ENCODE measurements at regions of chr11 and their contacts with region 1.

Region 1: DNA sequence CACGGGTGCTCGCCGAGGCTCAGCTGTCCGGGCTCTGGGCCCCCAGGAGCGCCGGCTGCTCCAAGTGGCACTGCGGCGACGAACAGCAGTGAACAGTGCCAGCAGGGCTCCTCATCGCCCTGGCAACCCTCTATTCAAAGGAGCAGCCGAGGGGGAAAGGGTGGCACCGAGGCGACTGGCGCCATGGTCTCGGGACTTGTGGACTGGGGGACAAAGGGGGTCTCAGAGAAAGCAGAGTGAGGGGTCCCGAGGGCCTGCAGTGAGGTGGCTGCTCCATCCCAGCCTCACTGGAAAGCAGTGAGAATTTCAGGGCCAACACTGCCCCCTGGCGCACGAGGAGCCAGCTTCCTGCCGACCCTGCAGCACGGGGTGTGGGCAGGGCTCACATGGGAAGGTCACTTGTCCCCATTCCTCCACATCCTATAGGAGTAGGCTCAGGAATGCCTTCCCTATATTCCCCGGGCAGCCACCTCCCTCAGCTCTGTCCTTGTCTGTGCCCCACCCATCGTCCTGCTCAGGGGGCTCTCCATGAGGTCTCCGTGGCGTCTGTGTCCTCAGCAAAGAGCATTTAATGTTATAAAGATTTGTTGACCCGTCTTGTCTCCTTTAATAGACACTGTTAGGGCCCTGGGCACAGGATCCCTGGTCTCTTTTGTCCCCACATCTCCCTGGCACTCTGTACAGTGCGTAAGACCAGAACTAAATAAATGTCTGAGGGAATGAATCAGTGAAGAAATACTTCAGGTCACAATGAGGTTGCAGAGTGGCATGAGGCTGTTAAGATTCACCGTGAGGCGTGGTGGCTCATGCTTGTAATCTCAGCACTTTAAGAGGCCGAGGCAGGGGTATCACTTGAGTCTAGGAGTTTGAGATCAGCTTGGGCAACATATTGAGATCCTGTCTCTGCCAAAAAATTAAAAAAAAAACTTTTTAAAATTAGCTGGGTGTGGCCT is 26.4 kb downstream of the LRFN4 start:
- DNase-seq: no peak
- ATAC-seq: peak; percentile 94
- H3K4me3 ChIP-seq: no peak overlapping the region
- H3K27ac ChIP-seq: no peak overlapping the region
- H3K4me1 ChIP-seq: peaks cover 3% of the 10 kb centered on the region; the same call in 1 of the 2 replicates
- H3K27me3 ChIP-seq: peaks cover 0 to 3% of the 10 kb centered on the region in 2 experiments; a peak in 2 of 4 replicates
- CTCF ChIP-seq: peak; percentile 71 to 77 (median 72)
- EP300 ChIP-seq: no peak
- POLR2A ChIP-seq: no peak
- RAD21 ChIP-seq: peak; percentile 71

Region 2: DNA sequence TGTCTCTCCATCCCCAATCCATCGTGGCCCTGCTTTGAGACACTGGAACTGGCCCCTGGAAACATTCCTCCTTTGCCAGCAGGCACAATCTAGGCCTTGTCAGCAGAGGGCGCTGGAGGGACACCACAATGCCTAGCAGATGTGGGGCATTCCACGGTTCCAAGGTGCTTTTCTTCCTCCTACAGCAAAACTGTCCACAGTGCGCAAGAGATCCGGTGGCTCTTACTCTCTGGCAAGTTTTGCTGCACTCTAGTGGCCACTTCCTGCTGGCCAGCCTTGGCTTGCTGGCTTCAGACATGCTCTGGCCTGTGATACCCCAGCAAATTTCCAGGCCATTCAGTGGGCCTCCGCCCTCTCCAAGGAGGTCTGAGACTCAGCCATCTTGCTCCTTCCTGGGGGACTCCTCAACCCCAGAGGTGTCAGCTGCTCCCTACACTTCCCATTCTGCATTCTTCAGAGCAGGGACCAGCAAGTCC is 188.5 kb before region 1 on chr11:
- CTCF ChIA-PET with region 1: interaction called, 10 read pairs
- POLR2A ChIA-PET with region 1: no interaction called
- RAD21 ChIA-PET with region 1: interaction called, 7 read pairs
- SMC1A ChIA-PET with region 1: interaction called, 7 read pairs
- in situ Hi-C with region 1: loop called (anchors 5 kb)
- intact Hi-C with region 1: loop called (anchors 1 kb)
- DNase-seq: peak; percentile 58
- ATAC-seq: peak; percentile 97
- H3K4me3 ChIP-seq: no peak overlapping the region
- H3K27ac ChIP-seq: no peak overlapping the region
- H3K4me1 ChIP-seq: no peaks in the 10 kb centered on the region
- H3K27me3 ChIP-seq: no peaks in the 10 kb centered on the region; a peak in 1 of 4 replicates
- CTCF ChIP-seq: peak; percentile 94 to 99 (median 97)
- EP300 ChIP-seq: 0 out of 4 replicates have a peak, but pooled peaks of 1 of the 2 experiments have one; percentile 8
- POLR2A ChIP-seq: no peak
- RAD21 ChIP-seq: peak; percentile 95

Region 3: DNA sequence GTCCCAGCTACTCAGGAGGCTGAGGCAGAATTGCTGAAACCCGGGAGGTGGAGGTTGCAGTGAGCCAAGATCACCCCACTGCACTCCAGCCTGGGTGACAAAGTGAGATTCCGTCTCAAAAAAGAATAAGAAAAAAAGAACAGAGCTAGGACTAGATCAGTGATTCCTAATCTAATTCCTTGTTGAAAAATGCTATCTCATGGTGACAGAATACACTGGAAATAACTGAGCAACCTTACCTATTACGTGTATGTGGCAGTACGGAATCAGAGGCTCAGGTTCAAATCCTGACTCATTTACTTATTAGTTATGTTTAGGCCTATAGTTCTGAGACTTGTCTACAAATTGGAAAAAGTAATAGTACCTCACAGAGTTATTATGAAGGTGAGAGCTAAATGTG is 59.6 kb before region 1 on chr11:
- CTCF ChIA-PET with region 1: no interaction called
- POLR2A ChIA-PET with region 1: no interaction called
- RAD21 ChIA-PET with region 1: no interaction called
- SMC1A ChIA-PET with region 1: no interaction called
- in situ Hi-C with region 1: no loop called
- intact Hi-C with region 1: no loop called
- DNase-seq: no peak
- ATAC-seq: no peak
- H3K4me3 ChIP-seq: no peak overlapping the region
- H3K27ac ChIP-seq: no peak overlapping the region
- H3K4me1 ChIP-seq: no peaks in the 10 kb centered on the region; the same call in 1 of the 2 replicates
- H3K27me3 ChIP-seq: no peaks in the 10 kb centered on the region
- CTCF ChIP-seq: no peak
- EP300 ChIP-seq: no peak
- POLR2A ChIP-seq: no peak
- RAD21 ChIP-seq: no peak

Region 4: DNA sequence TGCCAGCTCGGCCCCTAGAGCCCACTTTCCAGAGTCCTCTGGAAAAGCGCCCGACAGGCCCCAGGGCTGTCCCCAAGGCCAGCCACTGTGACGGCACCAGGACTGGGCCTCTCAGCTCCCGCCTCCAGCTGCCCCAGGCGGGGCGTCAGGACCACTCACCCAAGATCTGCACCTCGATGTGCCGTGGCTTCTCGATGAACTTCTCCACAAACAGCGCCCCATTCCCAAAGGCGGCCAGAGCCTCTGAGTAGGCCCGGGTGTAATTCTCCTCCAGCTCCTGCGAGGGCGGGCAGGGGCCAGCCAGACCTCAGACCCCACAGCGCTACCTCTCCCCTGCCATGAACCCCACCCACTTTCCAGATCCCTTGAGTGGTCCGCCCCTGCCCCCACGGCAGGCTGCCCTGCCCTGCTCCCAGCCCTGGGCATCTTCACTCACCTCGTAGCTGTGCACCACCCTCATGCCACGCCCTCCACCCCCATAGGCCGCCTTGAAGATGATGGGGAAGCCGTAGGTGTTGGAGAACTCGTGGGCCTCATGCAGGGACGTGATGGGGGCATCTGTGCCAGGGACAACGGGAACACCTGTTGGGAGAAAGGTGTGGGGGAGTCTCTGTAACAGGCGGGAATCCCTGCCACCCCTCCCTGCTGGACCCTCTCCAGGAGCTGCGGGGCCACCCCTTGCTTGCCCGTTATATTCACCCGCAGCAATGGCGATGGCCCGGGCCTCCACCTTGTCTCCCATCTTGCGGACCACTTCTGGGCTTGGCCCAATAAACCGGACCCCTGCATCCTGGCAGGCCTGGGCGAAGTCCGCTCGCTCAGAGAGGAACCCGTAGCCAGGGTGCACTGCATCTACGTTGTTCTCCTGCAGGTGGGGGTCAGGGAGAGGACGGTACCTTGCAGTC is 12.4 kb before region 1 on chr11:
- CTCF ChIA-PET with region 1: no interaction called
- POLR2A ChIA-PET with region 1: no interaction called
- RAD21 ChIA-PET with region 1: no interaction called
- SMC1A ChIA-PET with region 1: no interaction called
- in situ Hi-C with region 1: no loop called
- intact Hi-C with region 1: no loop called
- DNase-seq: no peak
- ATAC-seq: no peak
- H3K4me3 ChIP-seq: no peak overlapping the region
- H3K27ac ChIP-seq: no peak overlapping the region
- H3K4me1 ChIP-seq: peaks cover 11% of the 10 kb centered on the region
- H3K27me3 ChIP-seq: no peaks in the 10 kb centered on the region
- CTCF ChIP-seq: no peak
- EP300 ChIP-seq: no peak
- POLR2A ChIP-seq: no peak
- RAD21 ChIP-seq: no peak

Region 5: DNA sequence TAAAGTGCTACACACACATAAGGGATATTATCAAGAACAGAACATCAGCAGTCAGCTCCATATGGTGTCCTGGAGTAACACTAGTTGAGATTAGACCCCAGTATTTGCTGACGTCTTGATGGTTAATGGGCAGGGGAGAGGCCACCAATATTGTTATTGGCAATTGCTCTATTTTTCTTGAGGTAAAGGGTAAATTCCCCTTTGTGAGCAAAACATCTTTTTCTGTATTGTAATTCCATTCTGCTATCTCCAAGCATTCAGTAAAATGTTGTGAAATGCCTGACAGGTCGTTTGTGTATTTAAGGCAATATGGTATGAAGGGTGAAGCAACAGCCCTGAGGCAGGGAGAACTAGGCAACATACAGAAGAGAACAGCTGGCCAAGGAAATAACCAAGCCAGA is 53.0 kb after region 1 on chr11:
- CTCF ChIA-PET with region 1: no interaction called
- POLR2A ChIA-PET with region 1: no interaction called
- RAD21 ChIA-PET with region 1: no interaction called
- SMC1A ChIA-PET with region 1: no interaction called
- in situ Hi-C with region 1: no loop called
- intact Hi-C with region 1: no loop called
- DNase-seq: no peak
- ATAC-seq: no peak
- H3K4me3 ChIP-seq: no peak overlapping the region
- H3K27ac ChIP-seq: no peak overlapping the region
- H3K4me1 ChIP-seq: no peaks in the 10 kb centered on the region
- H3K27me3 ChIP-seq: peaks cover 0 to 7% of the 10 kb centered on the region in 2 experiments; a peak in 2 of 4 replicates
- CTCF ChIP-seq: no peak
- EP300 ChIP-seq: no peak
- POLR2A ChIP-seq: no peak
- RAD21 ChIP-seq: no peak